Activated B cell treated with CpG ODN at 0.5 μM for 24 hours (primary cell): ENCODE measurements at regions of chr1 and their contacts with region 1.

Region 1: DNA sequence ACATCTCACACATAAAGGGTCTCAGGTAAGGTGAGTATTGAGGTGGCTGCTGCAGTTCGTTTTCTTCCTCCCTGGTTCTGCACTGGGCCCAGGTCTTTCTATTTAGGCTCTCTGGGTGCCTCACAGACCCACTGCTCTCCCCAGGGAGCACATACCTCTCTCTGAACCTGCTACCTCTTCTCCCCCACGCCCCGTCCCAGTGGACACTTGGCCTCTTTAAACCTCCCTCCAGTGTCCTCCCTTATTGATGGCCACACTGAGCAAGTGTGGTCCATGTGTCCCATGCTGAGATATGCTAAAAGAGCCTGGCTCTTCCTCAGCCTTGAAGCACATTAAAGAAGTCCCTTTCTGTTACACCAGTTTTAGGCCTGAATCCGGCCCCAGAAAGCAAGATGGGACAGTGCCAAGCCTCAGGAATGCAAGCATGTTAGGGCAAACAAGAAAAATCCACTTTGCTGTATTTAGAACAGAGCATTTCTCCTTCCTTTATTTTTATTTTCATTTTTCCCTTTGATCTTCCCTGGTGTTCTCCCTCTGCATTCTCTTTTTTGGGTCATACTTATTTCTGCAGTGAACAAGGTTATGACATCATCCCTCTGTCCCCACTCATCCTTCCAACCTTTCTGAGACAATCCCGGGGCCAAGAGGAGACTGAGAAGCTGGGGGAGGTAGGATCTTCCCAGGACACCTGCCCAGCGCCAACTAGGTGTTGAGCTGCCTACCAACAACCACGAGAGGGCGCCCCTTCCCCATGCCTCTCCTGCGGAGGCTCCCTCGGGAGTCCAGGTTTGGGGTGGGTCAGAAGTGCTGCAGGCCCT is 5.0 kb upstream of the CHI3L2 start:
- DNase-seq: peak; percentile 75
- ATAC-seq: peak; percentile 49
- H3K4me3 Mint-ChIP-seq: peak overlapping the region; percentile 50
- H3K27ac Mint-ChIP-seq: peak overlapping the region; percentile 95
- H3K4me1 Mint-ChIP-seq: peaks cover 87% of the 10 kb centered on the region
- H3K27me3 Mint-ChIP-seq: no peaks in the 10 kb centered on the region
- CTCF ChIP-seq: peak; percentile 80

Region 2: DNA sequence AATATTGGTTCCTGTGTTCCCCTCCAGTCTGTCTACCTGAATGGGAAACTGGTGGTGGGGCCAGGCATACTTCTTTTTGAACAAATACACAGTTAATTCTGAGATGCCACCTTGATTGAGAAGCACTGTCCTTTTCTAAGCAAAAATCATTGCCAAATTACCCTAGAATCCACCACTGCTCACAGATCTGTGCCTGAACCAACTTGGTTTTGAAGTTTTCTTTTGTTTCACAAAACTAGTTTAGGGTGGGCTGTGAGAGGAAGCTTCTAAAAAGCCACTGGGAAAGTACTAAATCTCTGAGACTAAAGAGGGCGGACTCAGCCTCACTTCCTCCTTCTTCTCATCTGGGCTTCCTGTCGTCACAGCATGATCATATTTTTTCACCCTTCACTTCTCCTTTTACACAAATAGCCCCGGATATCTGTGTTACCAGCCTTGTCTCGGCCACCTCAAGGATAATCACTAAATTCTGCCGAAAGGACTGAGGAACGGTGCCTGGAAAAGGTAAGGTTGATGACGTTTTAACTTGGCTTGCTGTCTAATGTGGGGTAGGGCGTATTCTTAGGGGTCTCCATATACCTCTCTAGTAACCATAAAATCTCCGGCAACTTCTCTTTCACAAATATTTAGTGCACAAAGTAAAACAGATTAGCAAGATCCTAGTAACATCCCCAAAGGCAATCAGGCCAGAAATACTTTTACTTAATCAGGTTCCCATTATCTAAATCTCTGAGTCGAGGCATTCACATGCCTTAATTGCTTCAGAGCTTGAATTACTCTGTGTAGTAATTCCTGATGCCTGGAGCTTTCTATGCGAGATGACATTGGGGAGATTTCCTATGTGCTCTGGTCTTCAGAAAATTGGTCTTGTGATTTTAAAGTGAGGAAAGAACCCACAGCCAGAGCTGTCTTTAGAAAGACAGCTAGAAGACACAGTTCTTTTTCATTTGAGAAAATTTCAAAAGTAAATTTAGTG is 349.5 kb before region 1 on chr1 and contains the start of gene CD53:
- CTCF ChIA-PET with region 1: no interaction called
- POLR2A ChIA-PET with region 1: interaction called, 7 read pairs
- intact Hi-C with region 1: loop called (anchors 2 kb)
- DNase-seq: peak; percentile 27
- ATAC-seq: peak; percentile 64
- H3K4me3 Mint-ChIP-seq: peak within 1 kb of the TSS; percentile 96
- H3K27ac Mint-ChIP-seq: peak within 1 kb of the TSS; percentile 99
- H3K4me1 Mint-ChIP-seq: peaks cover 75% of the 10 kb centered on the region
- H3K27me3 Mint-ChIP-seq: no peaks in the 10 kb centered on the region
- CTCF ChIP-seq: no peak
- total RNA-seq, gene CD53: 491 and 522 TPM in 2 replicates

Region 3: DNA sequence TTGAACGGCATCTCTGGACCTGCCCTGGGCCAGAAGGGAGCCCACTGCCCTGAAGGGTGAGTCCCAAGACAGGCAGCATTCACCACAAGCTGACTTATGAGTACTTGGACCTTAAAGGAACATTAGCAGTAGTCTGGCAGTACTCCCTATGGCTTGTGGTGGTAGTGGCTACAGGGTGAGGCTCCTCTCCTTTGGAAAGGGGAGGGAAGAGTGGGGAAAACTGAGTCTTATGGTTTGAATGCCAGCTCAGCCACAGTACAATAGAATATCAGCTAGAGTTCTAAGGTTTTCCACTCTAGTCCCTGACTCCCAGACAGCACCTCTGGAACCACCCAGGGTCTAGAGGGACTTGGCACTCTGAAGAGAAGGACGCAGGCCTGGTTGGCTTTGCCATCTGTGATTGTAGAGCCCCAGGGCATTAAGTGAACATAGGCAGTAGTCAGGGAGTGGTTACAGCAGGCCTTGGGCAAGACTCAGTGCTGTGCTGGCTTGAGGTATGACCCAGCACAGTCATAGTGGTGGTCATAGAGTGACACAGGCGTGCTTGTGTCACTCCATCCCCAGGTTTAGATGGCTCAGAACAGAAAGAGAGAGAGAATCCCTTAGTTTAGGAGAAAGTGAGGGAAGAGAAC is 318.5 kb before region 1 on chr1:
- CTCF ChIA-PET with region 1: no interaction called
- POLR2A ChIA-PET with region 1: no interaction called
- intact Hi-C with region 1: no loop called
- DNase-seq: no peak
- ATAC-seq: peak; percentile 26
- H3K4me3 Mint-ChIP-seq: no peak overlapping the region
- H3K27ac Mint-ChIP-seq: peak overlapping the region; percentile 57
- H3K4me1 Mint-ChIP-seq: peaks cover 41% of the 10 kb centered on the region
- H3K27me3 Mint-ChIP-seq: no peaks in the 10 kb centered on the region
- CTCF ChIP-seq: no peak

Region 4: GRCh38 chr1:111127923-111128643 is 94.4 kb before region 1 on chr1:
- CTCF ChIA-PET with region 1: interaction called, 3 read pairs
- POLR2A ChIA-PET with region 1: interaction called, 15 read pairs
- intact Hi-C with region 1: loop called (anchors 1 kb)
- DNase-seq: no peak
- ATAC-seq: peak; percentile 83
- H3K4me3 Mint-ChIP-seq: peak overlapping the region; percentile 52
- H3K27ac Mint-ChIP-seq: peak overlapping the region; percentile 95
- H3K4me1 Mint-ChIP-seq: peaks cover 96% of the 10 kb centered on the region
- H3K27me3 Mint-ChIP-seq: no peaks in the 10 kb centered on the region
- CTCF ChIP-seq: no peak

Region 5: DNA sequence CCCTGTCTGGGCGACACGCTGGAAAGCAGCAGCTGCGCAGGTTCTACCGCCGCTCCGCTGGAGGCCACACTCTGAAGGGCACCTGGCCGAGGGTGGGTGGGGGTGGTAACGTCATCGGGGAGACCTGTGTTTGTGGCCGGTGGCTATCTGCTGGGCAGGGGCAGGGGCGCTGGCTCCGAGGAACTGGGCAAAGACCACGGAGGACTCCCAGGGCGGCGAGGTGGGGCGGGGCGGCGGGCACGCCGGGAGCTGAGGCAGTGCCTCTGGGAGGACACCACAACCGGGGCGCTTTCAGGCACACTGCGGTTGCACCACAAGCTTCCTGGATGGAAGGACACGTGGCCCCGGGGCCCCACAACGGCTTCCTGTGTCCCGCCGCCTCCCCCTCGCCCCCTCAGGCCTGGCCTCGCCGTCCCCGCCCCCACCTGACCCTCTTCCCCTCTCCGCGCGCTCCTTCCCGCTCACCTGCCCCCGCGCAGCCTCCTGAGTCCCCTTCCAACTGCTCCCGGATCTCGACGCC is 18.8 kb before region 1 on chr1:
- CTCF ChIA-PET with region 1: interaction called, 29 read pairs
- POLR2A ChIA-PET with region 1: interaction called, 258 read pairs
- intact Hi-C with region 1: loop called (anchors 1 kb)
- DNase-seq: peak; percentile 80
- ATAC-seq: peak; percentile 59
- H3K4me3 Mint-ChIP-seq: peak overlapping the region; percentile 89
- H3K27ac Mint-ChIP-seq: peak overlapping the region; percentile 93
- H3K4me1 Mint-ChIP-seq: peaks cover 85% of the 10 kb centered on the region
- H3K27me3 Mint-ChIP-seq: no peaks in the 10 kb centered on the region
- CTCF ChIP-seq: no peak

Region 6: GRCh38 chr1:111242805-111243523 is 20.4 kb after region 1 on chr1:
- CTCF ChIA-PET with region 1: no interaction called
- POLR2A ChIA-PET with region 1: no interaction called
- intact Hi-C with region 1: no loop called
- DNase-seq: no peak
- ATAC-seq: no peak
- H3K4me3 Mint-ChIP-seq: no peak overlapping the region
- H3K27ac Mint-ChIP-seq: no peak overlapping the region
- H3K4me1 Mint-ChIP-seq: no peaks in the 10 kb centered on the region
- H3K27me3 Mint-ChIP-seq: no peaks in the 10 kb centered on the region
- CTCF ChIP-seq: no peak

Region 7: GRCh38 chr1:111399792-111400610 is 177.5 kb after region 1 on chr1:
- CTCF ChIA-PET with region 1: interaction called, 69 read pairs
- POLR2A ChIA-PET with region 1: interaction called, 6 read pairs
- intact Hi-C with region 1: loop called (anchors 1 kb)
- DNase-seq: no peak
- ATAC-seq: no peak
- H3K4me3 Mint-ChIP-seq: no peak overlapping the region
- H3K27ac Mint-ChIP-seq: no peak overlapping the region
- H3K4me1 Mint-ChIP-seq: peaks cover 22% of the 10 kb centered on the region
- H3K27me3 Mint-ChIP-seq: no peaks in the 10 kb centered on the region
- CTCF ChIP-seq: peak; percentile 79

Region 8: GRCh38 chr1:111507411-111508201 is 285.1 kb after region 1 on chr1:
- CTCF ChIA-PET with region 1: interaction called, 4 read pairs
- POLR2A ChIA-PET with region 1: interaction called, 5 read pairs
- intact Hi-C with region 1: loop called (anchors 2 kb)
- DNase-seq: peak; percentile 66
- ATAC-seq: peak; percentile 67
- H3K4me3 Mint-ChIP-seq: peak overlapping the region; percentile 77
- H3K27ac Mint-ChIP-seq: no peak overlapping the region
- H3K4me1 Mint-ChIP-seq: peaks cover 67% of the 10 kb centered on the region
- H3K27me3 Mint-ChIP-seq: no peaks in the 10 kb centered on the region
- CTCF ChIP-seq: no peak

Region 9: DNA sequence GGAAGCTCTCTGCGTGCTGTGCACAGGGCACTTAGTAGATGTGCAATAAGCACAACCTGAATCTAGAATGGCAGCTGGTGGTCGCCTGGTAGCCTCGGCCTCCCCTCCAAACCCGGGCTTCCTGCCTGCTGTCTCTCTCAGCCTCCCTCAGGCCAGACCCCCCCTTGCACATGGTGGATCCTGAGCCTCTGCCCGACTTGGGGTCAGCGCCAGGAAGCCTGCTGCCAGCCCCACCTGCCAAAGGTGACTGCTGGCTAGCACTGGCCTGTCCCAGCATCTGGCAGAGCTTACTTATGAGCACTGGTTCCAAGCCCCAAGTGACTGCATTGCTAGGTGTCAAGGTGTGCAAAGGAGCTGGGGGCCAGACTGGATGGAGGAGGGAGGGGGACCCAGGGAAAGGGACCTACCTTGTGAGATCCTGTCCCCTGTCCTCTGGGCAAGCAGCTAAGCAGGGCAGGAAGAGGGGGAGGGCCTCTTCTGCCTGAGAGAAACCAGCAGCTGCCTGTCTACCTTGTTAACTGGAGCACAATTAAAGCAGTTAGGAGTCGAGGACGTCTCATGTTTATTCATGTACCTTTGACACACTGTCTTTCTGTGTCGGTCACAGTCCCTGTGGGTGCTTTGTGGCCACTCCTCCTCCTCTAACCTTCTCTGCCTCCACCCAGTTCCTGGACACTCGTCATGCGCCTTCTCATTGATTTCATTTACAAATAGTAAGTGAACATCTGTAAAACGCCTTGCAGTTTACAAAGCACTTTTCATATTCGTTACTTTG is 634.1 kb after region 1 on chr1:
- CTCF ChIA-PET with region 1: no interaction called
- POLR2A ChIA-PET with region 1: no interaction called
- intact Hi-C with region 1: no loop called
- DNase-seq: no peak
- ATAC-seq: no peak
- H3K4me3 Mint-ChIP-seq: no peak overlapping the region
- H3K27ac Mint-ChIP-seq: no peak overlapping the region
- H3K4me1 Mint-ChIP-seq: no peaks in the 10 kb centered on the region
- H3K27me3 Mint-ChIP-seq: peaks cover 23% of the 10 kb centered on the region
- CTCF ChIP-seq: no peak

Region 10: GRCh38 chr1:112251766-112252506 is 1029.4 kb after region 1 on chr1:
- CTCF ChIA-PET with region 1: no interaction called
- POLR2A ChIA-PET with region 1: no interaction called
- intact Hi-C with region 1: no loop called
- DNase-seq: no peak
- ATAC-seq: no peak
- H3K4me3 Mint-ChIP-seq: no peak overlapping the region
- H3K27ac Mint-ChIP-seq: no peak overlapping the region
- H3K4me1 Mint-ChIP-seq: no peaks in the 10 kb centered on the region
- H3K27me3 Mint-ChIP-seq: peaks cover 22% of the 10 kb centered on the region
- CTCF ChIP-seq: no peak